ENCODE measurements at regions of chr7 and their contacts with region 1.

Region 1: DNA sequence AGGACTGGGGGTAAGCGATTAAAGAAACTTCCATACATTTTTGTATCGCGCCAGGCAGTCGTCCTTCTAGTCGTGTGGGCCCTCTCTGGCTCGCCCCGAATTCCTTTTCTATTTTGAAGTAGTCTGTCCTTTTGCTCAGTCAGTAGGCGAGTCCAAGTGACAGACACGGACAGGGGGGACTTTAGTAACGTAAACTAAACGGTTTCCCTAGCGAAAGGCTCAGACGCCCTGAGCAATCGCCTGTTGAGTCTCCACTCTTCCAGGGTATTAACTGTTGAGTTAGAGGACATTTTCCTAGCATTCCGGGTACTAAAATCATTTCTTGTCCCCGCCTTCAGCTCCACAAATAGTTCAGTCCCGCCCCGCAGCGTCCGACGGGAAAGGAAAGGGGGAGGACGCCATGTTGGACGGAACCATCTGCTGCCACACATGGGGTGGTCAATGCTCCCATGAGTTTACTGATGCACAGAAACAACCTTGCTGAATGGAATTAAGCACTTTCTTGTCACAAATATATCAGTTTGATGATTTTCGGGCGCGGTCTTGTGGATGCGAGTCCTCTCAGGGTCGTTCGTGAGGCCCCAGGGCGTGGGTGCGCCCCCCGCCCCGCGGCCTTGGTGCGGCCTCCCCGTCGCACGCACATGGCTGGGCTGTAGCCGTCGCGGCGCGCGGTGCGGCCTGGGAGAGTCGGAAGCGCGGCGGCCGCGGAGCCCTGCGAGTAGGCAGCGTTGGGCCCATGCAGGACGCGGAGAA is at the start of gene EIF3B:
- DNase-seq: peak; percentile 89
- H3K4me3 ChIP-seq: peak within 1 kb of the TSS; percentile 95 to 99 (median 97)
- H3K27ac ChIP-seq: peak within 1 kb of the TSS; percentile 99
- H3K4me1 ChIP-seq: peaks cover 15% of the 10 kb centered on the region
- H3K27me3 ChIP-seq: no peaks in the 10 kb centered on the region
- CTCF ChIP-seq: no peak
- total RNA-seq, gene EIF3B: 154 to 213 TPM

Region 2: DNA sequence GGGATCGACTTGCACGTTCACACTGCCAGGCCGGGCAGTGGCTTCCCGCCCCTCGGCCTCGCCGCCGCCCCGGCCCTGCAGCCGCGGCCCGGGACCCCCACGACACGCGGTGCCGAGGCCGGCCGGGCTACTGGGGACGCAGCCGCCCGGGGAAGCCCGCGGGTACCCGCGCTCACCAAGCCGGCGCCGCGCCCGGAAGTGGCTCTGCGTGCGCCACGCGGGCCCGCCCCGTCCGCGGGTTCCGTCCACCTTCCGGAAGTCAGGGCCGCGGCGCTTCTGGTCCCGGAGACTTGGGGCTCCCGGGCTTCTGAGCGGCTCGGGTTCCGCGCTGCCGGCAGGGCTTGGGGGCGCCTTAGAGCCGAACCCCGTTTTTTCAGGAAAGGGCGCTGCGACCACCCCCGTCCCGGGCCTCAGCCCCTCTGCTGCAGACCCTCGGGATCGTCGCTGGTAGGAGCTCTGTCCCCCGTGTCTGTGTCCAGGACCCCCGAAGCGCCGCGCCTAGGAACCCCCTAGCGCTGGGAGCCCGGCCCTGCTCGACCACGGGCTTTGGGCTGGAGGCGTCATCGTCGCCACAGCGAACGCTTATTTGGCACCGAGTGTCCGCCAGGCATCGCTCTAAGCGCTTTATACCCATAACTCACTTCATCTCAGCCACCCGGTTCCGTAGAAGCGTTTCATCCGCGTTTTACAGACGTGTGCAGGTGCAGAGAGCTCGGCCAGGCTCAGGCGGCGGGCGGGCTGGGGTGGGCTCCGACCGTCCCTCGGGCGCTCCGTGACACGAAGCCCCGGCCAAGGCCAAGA is 784.3 kb before region 1 on chr7 and contains the start of gene PSMG3:
- CTCF ChIA-PET with region 1: no interaction called
- dilution Hi-C with region 1: no loop called
- in situ Hi-C with region 1: loop called in 1 of 2 experiments (anchors 25 kb)
- intact Hi-C with region 1: no loop called
- DNase-seq: peak; percentile 88
- H3K4me3 ChIP-seq: peak within 1 kb of the TSS; percentile 84 to 97 (median 93)
- H3K27ac ChIP-seq: peak within 1 kb of the TSS; percentile 67
- H3K4me1 ChIP-seq: peaks cover 27% of the 10 kb centered on the region
- H3K27me3 ChIP-seq: no peaks in the 10 kb centered on the region
- CTCF ChIP-seq: peak in 1 of 2 donors; percentile 33
- total RNA-seq, gene PSMG3: 25.8 to 34.0 TPM

Region 3: DNA sequence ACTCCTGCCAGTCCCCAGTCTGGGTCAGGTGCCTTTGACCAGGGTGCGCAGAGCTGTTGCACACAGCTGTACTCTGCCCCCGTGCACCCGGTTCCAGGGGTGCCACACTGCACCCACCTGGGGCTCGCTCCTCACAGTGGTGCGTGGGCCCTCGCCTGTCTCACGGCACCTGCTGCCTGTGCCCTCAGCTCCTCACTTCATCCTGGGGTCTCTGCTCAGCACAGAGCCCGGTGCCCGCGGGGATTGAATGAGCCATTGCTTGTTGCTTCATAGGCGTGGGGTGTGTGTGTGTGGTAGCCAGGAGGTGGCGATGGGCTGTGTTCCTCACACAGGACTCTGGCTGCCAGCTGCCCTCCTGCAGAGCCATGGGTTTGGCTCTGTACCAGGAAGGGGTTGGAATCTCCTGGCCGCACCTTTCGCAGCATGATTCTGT is 18.8 kb after region 1 on chr7:
- CTCF ChIA-PET with region 1: no interaction called
- dilution Hi-C with region 1: no loop called
- in situ Hi-C with region 1: no loop called
- intact Hi-C with region 1: no loop called
- DNase-seq: peak; percentile 24
- H3K4me3 ChIP-seq: no peak overlapping the region
- H3K27ac ChIP-seq: no peak overlapping the region
- H3K4me1 ChIP-seq: peaks cover 7% of the 10 kb centered on the region
- H3K27me3 ChIP-seq: no peaks in the 10 kb centered on the region
- CTCF ChIP-seq: peak in 1 of 2 donors; percentile 13

Region 4: DNA sequence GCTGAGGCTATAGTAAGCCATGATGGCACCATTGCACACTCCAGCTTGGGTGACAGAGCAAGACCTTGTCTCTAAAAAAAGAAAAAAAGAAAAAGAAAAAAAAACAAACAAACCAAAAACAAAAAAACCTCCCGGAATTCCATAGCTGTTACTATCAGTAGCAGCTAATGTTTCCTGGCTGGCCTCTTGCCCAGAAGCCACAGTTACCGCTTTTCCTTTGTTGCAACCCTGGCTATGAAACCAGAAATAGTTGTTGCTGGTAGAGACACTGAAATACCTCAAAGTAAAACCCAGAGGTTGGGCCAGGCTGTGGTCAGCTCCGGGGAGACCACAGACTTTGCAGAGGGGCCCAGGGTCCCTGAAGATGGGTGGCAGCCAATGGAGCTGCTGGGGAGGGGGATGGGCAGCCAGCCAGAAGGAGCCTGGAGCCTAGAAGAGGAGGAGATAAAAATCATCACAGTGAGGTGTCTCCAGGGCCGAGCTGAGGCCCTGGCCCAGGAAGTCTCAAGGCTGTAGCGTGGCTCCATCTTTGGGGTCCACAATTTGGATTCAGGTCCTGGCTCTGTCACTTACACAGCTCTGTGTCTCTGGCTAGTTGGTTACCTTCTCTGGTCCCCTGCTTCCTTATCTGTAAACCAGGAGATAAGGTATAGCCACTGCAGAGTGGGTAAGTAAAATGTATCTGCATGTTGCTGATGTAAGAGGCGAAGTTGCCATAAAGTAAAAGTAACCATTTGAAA is 45.7 kb after region 1 on chr7:
- CTCF ChIA-PET with region 1: no interaction called
- dilution Hi-C with region 1: no loop called
- in situ Hi-C with region 1: no loop called
- intact Hi-C with region 1: loop called (anchors 2 kb)
- DNase-seq: peak; percentile 70
- H3K4me3 ChIP-seq: no peak overlapping the region
- H3K27ac ChIP-seq: no peak overlapping the region
- H3K4me1 ChIP-seq: peaks cover 33% of the 10 kb centered on the region
- H3K27me3 ChIP-seq: no peaks in the 10 kb centered on the region
- CTCF ChIP-seq: no peak

Region 5: DNA sequence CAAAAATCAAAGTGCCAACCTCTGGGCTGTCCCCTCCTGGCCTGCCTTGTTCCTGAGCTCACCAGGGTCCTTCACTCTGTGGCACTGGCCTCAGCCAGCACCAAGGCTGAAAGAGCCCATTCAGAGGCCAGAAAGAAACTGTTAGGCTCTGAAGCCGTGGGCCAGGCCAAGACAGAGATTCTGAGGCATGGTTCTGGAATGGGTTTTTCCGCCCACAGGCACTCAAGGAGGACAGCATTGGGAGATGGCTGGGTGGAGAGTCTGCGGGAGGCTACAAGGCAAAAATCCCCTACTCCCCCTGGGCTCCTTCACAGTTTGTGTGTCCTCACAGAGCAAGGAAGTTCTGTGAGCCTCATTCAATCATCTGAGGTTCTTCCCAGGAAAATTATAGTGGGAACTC is 90.1 kb after region 1 on chr7:
- CTCF ChIA-PET with region 1: no interaction called
- dilution Hi-C with region 1: no loop called
- in situ Hi-C with region 1: no loop called
- intact Hi-C with region 1: no loop called
- DNase-seq: peak; percentile 57
- H3K4me3 ChIP-seq: no peak overlapping the region
- H3K27ac ChIP-seq: no peak overlapping the region
- H3K4me1 ChIP-seq: no peaks in the 10 kb centered on the region
- H3K27me3 ChIP-seq: no peaks in the 10 kb centered on the region
- CTCF ChIP-seq: no peak